ENCODE measurements at regions of chr4 and their contacts with region 1.

Region 1: DNA sequence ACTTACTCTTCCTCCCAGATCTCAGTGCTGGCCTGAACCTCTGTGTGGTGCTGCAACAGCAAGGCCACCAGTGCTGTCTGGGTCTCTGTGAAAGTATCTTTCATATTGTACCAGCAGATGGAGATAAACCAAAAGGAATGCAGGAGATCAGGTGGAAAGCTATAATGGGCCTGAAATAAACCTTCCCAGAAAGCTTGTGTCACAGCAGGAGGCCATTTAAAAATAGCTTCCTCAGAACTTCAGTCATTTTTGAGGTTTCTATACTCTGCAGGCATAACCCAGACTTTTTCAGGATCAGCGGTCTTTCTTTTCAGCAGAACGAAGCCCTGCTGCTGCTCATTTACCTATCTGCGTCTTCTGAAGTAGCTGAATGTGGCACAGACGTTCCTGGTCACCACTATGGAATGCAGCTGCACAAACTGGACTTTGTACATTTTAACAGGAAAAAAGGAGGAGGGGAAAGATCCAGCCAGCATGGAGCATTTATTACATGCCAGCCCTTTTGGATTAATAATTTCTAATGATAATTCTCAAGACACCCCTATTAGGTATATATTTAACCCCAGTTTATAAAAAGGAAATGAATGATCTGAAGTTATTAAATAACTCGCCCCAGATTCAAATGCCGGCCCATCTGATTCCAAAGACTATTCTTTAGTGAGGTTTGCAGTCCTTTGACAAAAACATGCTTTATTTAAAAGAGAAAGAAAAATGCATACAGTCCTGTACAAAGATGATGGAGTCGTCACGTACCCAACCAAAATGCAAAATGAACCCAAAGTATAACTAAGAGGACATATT is 119.7 kb downstream of the NFKB1 start:
- DNase-seq: peak; percentile 37
- ATAC-seq: peak; percentile 57
- H3K4me3 ChIP-seq: no peak overlapping the region
- H3K4me3 Mint-ChIP-seq: no peak overlapping the region
- H3K27ac ChIP-seq: no peak overlapping the region
- H3K27ac Mint-ChIP-seq: no peak overlapping the region
- H3K4me1 ChIP-seq: peaks cover 3 to 6% of the 10 kb centered on the region in 2 donors
- H3K4me1 Mint-ChIP-seq: peaks cover 9% of the 10 kb centered on the region
- H3K27me3 ChIP-seq: no peaks in the 10 kb centered on the region
- H3K27me3 Mint-ChIP-seq: no peaks in the 10 kb centered on the region
- CTCF ChIP-seq: peak; percentile 30

Region 2: DNA sequence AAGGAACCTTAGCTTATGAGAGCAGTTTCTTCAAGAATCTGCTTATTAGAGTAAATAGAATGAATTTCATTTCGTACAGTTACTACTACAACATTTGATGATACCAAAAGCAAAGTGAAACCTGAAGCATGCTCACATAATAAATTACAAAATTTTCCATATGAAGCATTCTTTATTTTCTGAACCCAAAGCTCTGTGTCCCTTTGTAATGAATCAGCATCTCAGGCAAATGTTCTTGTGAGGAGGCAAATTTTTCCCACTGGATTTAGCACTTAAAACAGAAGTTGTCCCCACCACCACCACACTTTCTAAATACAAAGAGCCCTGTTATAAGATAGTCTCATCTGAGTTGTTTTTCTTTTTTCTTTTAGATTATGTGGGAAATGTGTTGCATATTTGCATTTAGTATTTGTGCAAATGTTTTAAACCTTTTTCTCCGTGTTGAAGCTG is 190.4 kb before region 1 on chr4:
- CTCF ChIA-PET with region 1: interaction called, 3 read pairs
- POLR2A ChIA-PET with region 1: no interaction called
- intact Hi-C with region 1: loop called (anchors 1 kb)
- DNase-seq: no peak
- ATAC-seq: no peak
- H3K4me3 ChIP-seq: peak overlapping the region; percentile 48 to 79 (median 61)
- H3K4me3 Mint-ChIP-seq: peak overlapping the region; percentile 91
- H3K27ac ChIP-seq: peak overlapping the region in 1 of 2 donors; percentile 38
- H3K27ac Mint-ChIP-seq: peak overlapping the region; percentile 59
- H3K4me1 ChIP-seq: peaks cover 0 to 5% of the 10 kb centered on the region in 2 donors
- H3K4me1 Mint-ChIP-seq: peaks cover 5% of the 10 kb centered on the region
- H3K27me3 ChIP-seq: no peaks in the 10 kb centered on the region
- H3K27me3 Mint-ChIP-seq: no peaks in the 10 kb centered on the region
- CTCF ChIP-seq: no peak

Region 3: DNA sequence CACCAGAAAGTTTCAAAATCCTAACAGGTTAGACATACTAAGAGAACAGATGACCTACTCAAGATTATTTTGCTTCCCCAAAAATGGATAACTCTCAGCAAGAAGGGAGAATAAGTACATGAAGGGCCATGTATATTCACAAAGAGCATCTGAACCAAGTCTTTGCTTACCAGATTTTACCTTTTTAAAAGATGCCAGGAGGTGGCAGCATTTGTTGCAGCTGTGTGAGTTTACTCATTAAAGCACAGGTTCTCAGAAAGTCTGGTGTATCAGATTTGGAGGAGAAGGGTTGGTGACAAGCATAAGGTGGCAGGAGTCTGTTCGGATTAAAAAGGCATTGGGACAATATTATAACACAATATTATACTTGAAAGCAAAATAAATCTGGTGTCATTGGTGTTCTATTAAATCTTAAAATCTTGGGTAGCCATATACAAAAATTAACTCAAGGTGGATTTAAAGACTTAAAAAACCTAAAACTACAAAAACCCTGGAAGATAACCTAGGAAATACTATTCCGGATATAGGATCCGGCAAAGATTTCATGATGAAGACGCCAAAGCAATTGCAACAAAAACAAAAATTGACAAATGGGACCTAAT is 171.0 kb before region 1 on chr4:
- CTCF ChIA-PET with region 1: interaction called, 18 read pairs
- POLR2A ChIA-PET with region 1: no interaction called
- intact Hi-C with region 1: loop called (anchors 1 kb)
- DNase-seq: peak; percentile 76
- ATAC-seq: peak; percentile 60
- H3K4me3 ChIP-seq: no peak overlapping the region
- H3K4me3 Mint-ChIP-seq: no peak overlapping the region
- H3K27ac ChIP-seq: no peak overlapping the region
- H3K27ac Mint-ChIP-seq: no peak overlapping the region
- H3K4me1 ChIP-seq: peaks cover 4 to 8% of the 10 kb centered on the region in 2 donors
- H3K4me1 Mint-ChIP-seq: peaks cover 5% of the 10 kb centered on the region
- H3K27me3 ChIP-seq: no peaks in the 10 kb centered on the region
- H3K27me3 Mint-ChIP-seq: no peaks in the 10 kb centered on the region
- CTCF ChIP-seq: peak; percentile 71

Measured in B cell (primary cell).